CD8-positive, alpha-beta T cell (primary cell): ENCODE measurements at regions of chr7 and their contacts with region 1.

Region 1: GRCh38 chr7:142523821-142524460 is 225.3 kb upstream of the PRSS1 start:
- DNase-seq: no peak
- ATAC-seq: no peak
- H3K4me3 ChIP-seq: no peak overlapping the region
- H3K4me3 Mint-ChIP-seq: no peak overlapping the region
- H3K27ac ChIP-seq: no peak overlapping the region
- H3K27ac Mint-ChIP-seq: peak overlapping the region; percentile 14
- H3K4me1 ChIP-seq: peaks cover 12% of the 10 kb centered on the region
- H3K4me1 Mint-ChIP-seq: peaks cover 18% of the 10 kb centered on the region
- H3K27me3 ChIP-seq: no peaks in the 10 kb centered on the region
- H3K27me3 Mint-ChIP-seq: no peaks in the 10 kb centered on the region
- CTCF ChIP-seq: no peak

Region 2: DNA sequence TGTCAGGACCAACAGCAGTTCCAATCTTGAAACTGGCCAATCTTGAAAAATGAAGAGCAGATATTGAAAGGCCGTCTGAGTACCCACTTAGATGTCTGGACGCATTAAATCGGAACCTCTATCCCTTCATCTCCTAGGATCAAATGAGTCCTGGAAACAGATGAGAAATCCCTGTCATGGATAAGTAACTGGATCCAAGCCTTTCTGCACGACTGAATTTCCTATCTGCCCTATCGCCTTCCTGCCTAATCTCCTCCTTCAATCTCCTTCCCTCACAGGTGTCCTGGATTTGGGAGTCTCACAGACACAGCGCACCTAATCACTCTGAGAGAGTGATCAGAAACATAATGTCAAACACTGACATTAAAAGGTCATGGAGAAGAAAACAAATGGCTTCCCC is 20.9 kb before region 1 on chr7:
- CTCF ChIA-PET with region 1: interaction called, 11 read pairs
- POLR2A ChIA-PET with region 1: interaction called, 3 read pairs
- intact Hi-C with region 1: loop called (anchors 1 to 2 kb)
- DNase-seq: no peak
- ATAC-seq: no peak
- H3K4me3 ChIP-seq: no peak overlapping the region
- H3K4me3 Mint-ChIP-seq: no peak overlapping the region
- H3K27ac ChIP-seq: no peak overlapping the region
- H3K27ac Mint-ChIP-seq: no peak overlapping the region
- H3K4me1 ChIP-seq: peaks cover 19% of the 10 kb centered on the region
- H3K4me1 Mint-ChIP-seq: peaks cover 29% of the 10 kb centered on the region
- H3K27me3 ChIP-seq: no peaks in the 10 kb centered on the region
- H3K27me3 Mint-ChIP-seq: no peaks in the 10 kb centered on the region
- CTCF ChIP-seq: no peak

Region 3: GRCh38 chr7:142535123-142535779 is 11.3 kb after region 1 on chr7:
- CTCF ChIA-PET with region 1: interaction called, 17 read pairs
- POLR2A ChIA-PET with region 1: no interaction called
- intact Hi-C with region 1: no loop called
- DNase-seq: peak; percentile 24 to 82 (median 68)
- ATAC-seq: peak; percentile 77
- H3K4me3 ChIP-seq: peak overlapping the region; percentile 20 to 22
- H3K4me3 Mint-ChIP-seq: peak overlapping the region; percentile 38
- H3K27ac ChIP-seq: peak overlapping the region; percentile 42 to 46
- H3K27ac Mint-ChIP-seq: peak overlapping the region; percentile 73
- H3K4me1 ChIP-seq: peaks cover 24% of the 10 kb centered on the region
- H3K4me1 Mint-ChIP-seq: peaks cover 29% of the 10 kb centered on the region
- H3K27me3 ChIP-seq: no peaks in the 10 kb centered on the region
- H3K27me3 Mint-ChIP-seq: no peaks in the 10 kb centered on the region
- CTCF ChIP-seq: no peak

Region 4: DNA sequence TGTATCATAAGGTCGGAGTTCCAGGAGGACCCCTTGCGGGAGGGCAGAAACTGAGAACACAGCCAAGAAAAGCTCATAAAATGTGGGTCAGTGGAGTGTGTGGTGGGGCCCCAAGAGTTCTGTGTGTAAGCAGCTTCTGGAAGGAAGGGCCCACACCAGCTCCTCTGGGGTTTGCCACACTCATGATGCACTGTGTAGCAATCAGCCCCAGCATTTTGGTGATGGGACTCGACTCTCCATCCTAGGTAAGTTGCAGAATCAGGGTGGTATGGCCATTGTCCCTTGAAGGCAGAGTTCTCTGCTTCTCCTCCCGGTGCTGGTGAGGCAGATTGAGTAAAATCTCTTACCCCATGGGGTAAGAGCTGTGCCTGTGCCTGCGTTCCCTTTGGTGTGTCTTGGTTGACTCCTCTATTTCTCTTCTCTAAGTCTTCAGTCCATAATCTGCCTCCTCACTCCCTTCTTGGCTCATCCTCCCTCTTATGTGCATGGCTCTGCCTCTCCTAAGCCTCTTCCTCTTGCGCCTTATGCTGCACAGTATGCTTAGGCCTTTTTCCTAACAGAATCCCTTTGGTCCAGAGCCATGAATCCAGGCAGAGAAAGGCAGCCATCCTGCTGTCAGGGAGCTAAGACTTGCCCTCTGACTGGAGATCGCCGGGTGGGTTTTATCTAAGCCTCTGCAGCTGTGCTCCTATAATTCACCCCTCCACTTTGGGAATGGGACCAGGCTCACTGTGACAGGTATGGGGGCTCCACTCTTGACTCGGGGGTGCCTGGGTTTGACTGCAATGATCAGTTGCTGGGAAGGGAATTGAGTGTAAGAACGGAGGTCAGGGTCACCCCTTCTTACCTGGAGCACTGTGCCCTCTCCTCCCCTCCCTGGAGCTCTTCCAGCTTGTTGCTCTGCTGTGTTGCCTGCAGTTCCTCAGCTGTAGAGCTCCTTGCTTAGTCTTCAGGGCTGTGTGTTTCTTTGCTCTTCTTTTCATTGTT is 264.7 kb after region 1 on chr7:
- CTCF ChIA-PET with region 1: no interaction called
- POLR2A ChIA-PET with region 1: interaction called, 11 read pairs
- intact Hi-C with region 1: loop called in 1 of 2 experiments (anchors 2 kb)
- DNase-seq: peak in 3 of 9 experiments; percentile 23 to 70 (median 33)
- ATAC-seq: no peak
- H3K4me3 ChIP-seq: peak overlapping the region; percentile 70 to 91
- H3K4me3 Mint-ChIP-seq: peak overlapping the region; percentile 98
- H3K27ac ChIP-seq: peak overlapping the region; percentile 98 to 99
- H3K27ac Mint-ChIP-seq: peak overlapping the region; percentile 99
- H3K4me1 ChIP-seq: peaks cover 30% of the 10 kb centered on the region
- H3K4me1 Mint-ChIP-seq: peaks cover 31% of the 10 kb centered on the region
- H3K27me3 ChIP-seq: no peaks in the 10 kb centered on the region
- H3K27me3 Mint-ChIP-seq: no peaks in the 10 kb centered on the region
- CTCF ChIP-seq: no peak